Activated B cell treated with CpG ODN at 0.5 μM for 24 hours (primary cell): ENCODE measurements at regions of chr13 and their contacts with region 1.

Region 1: GRCh38 chr13:46587807-46588418 is 34.9 kb downstream of the LRCH1 start:
- DNase-seq: no peak
- ATAC-seq: peak; percentile 69
- H3K4me3 Mint-ChIP-seq: peak overlapping the region; percentile 59
- H3K27ac Mint-ChIP-seq: peak overlapping the region; percentile 87
- H3K4me1 Mint-ChIP-seq: peaks cover 99% of the 10 kb centered on the region
- H3K27me3 Mint-ChIP-seq: no peaks in the 10 kb centered on the region
- CTCF ChIP-seq: no peak

Region 2: DNA sequence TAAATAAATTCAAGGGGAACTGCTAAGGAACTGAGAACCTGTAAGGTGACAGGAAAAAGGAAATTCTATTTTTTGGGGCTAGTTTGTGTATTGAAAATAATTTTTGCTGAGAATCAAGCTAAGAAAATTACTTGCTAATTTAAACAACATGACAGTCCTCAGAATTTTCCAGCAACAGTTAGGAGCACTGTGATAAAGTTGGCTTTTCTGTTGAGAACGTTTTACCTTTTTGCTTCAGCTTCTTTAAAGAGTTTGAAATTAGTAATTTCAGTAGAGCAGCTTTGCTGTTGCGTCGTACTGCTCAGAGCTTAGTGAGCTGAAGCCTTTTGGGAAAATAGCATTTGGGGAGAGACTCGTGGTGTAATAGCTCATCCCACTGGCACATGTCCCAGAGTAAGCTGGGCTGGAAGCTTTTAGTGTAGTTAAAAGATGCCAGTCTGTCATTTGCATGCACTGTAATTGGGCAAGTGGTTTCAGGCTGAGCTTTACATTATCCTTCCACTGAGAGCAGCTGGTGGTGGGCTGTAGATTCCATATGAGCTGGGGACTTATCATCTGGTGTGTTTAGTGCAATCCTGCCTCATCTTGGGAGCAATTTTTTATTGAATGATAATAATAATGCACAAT is 34.8 kb after region 1 on chr13:
- CTCF ChIA-PET with region 1: no interaction called
- POLR2A ChIA-PET with region 1: interaction called, 5 read pairs
- intact Hi-C with region 1: loop called (anchors 5 kb)
- DNase-seq: no peak
- ATAC-seq: no peak
- H3K4me3 Mint-ChIP-seq: peak overlapping the region; percentile 41
- H3K27ac Mint-ChIP-seq: peak overlapping the region; percentile 60
- H3K4me1 Mint-ChIP-seq: peaks cover 94% of the 10 kb centered on the region
- H3K27me3 Mint-ChIP-seq: no peaks in the 10 kb centered on the region
- CTCF ChIP-seq: no peak

Region 3: GRCh38 chr13:46655377-46656180 is 67.7 kb after region 1 on chr13:
- CTCF ChIA-PET with region 1: no interaction called
- POLR2A ChIA-PET with region 1: interaction called, 14 read pairs
- intact Hi-C with region 1: no loop called
- DNase-seq: no peak
- ATAC-seq: no peak
- H3K4me3 Mint-ChIP-seq: peak overlapping the region; percentile 28
- H3K27ac Mint-ChIP-seq: peak overlapping the region; percentile 70
- H3K4me1 Mint-ChIP-seq: peaks cover 51% of the 10 kb centered on the region
- H3K27me3 Mint-ChIP-seq: no peaks in the 10 kb centered on the region
- CTCF ChIP-seq: no peak

Region 4: GRCh38 chr13:46743191-46743590 is 155.3 kb after region 1 on chr13:
- CTCF ChIA-PET with region 1: no interaction called
- POLR2A ChIA-PET with region 1: no interaction called
- intact Hi-C with region 1: no loop called
- DNase-seq: no peak
- ATAC-seq: no peak
- H3K4me3 Mint-ChIP-seq: no peak overlapping the region
- H3K27ac Mint-ChIP-seq: no peak overlapping the region
- H3K4me1 Mint-ChIP-seq: no peaks in the 10 kb centered on the region
- H3K27me3 Mint-ChIP-seq: no peaks in the 10 kb centered on the region
- CTCF ChIP-seq: no peak